Dorsolateral prefrontal cortex (tissue), 120 donors: ENCODE measurements at regions of chr12 and their contacts with region 1.

Region 1: DNA sequence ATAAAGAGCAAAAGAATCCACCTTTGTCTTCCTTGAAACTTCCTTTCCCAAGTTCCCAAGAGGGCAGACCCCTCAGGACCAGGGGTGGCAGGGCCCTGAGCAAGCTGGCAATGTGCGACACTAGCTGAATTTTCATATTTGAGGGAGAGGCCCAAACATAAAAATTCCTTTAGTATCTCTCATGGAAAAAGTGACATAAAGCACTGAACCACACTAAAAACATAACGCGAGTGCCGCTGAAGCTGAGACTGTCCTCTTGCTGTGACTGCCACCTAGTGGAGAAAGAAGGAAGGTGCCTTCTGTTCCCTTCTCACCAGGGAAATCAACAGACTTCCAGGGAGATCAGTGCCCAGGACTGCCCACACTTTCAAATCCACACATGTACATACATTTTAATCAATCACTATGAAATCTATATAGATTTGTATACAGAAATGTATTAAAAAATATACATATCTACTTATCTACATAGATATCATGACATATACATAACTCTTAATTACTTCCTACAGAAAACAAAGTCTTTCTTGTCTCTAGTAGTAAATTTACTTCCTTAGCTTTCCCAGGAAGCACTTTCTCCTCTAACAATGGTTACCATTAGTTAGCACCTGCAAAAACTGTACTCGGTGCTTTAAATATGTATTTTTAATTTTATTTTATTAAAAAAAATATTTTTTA is 53.8 kb downstream of the SSH1 start:
- DNase-seq: peak in 7 of 10 donors; percentile 70 to 89 (median 75)
- H3K4me3 ChIP-seq: peak overlapping the region in 3 of 59 donors; percentile 6 to 21 (median 10)
- H3K27ac ChIP-seq: peak overlapping the region in 58 of 59 donors; percentile 2 to 87 (median 73)
- H3K27me3 ChIP-seq: no peaks in the 10 kb centered on the region
- CTCF ChIP-seq: peak; percentile 93 to 100 (median 98)

Region 2: DNA sequence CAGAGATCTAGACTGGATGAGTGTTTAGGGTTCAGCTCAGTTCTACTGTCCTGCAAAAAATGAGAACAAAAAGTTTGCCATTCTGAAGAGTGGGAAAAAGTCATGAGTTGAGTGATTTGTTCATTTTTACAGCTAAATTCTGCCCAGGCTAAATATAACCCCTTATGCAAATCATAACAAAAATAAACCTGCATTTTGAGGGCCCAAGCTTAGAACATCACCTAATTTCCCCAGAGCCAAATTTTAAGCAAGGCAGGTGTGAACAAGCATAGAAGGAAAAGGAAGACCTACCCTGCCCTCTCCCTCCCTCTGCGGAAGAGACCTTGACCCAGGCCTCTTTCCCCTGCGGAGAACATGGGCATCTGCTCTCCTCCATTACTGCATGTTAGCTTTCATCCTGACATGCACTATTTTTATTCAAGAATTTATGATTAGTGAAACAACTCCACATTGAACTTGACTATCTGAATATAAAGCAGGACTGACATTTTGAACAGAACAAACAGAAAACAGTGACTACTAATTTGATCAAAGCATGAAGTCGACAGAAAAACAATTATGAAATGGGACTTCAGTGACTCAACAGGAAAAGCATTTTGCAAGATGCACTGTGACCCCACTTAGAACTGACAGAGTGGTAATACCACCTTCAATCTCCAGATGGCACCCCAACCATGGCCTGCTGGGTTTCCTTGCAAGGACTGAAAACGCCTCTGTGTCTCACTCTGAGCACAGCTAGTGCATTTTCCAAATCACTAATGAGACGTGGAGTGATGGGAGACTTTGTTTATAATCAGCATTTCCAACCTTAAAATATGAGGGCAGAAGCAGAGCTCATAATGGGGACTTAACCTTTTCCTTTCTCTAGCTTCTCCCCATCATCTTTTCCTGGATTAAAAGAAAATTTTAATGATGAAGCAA is 139.0 kb before region 1 on chr12:
- intact Hi-C with region 1: loop called (anchors 1 to 2 kb)
- DNase-seq: peak; percentile 52 to 92 (median 82)
- H3K4me3 ChIP-seq: peak overlapping the region in 1 of 59 donors; percentile 10
- H3K27ac ChIP-seq: peak overlapping the region; percentile 18 to 90 (median 77)
- H3K27me3 ChIP-seq: no peaks in the 10 kb centered on the region
- CTCF ChIP-seq: peak; percentile 87 to 99 (median 96)

Region 3: DNA sequence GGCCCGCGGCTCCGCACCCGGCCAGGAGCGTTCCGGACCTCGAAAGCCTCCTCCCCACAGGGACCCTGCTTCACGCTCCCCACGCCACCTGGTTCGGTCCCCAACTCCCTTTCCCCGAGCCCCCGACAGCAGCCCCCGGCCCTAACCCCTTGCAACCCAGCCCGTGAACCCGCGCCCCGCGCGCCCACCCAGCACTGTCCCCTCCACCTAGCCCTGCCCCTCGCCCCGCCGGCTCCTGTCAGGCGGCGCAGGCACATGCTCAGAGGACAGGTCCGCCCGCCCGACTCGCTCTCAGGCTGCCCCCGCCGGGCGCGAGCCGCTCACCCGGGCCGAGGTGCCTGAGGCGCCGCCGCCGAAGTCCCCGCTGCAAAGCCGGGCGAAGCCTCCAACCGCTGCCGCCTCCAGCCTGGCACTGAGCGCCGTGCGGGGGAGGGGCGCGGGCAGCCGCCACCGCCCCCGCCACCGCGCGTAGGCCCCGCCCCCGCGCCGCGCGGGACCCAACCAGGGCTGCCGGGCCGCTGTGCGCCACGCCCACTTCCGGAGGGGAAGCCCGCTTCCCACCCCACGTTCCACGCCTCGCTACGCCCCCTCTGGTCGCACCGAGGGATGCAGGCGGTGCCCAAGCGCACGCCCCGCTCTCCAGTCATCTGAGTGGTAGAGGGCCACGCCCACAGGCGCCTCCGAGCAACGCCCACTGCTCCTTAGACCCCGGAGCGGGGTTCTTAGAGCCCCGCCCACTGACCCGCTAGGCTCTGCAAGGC is 72.3 kb before region 1 on chr12 and contains the start of gene CORO1C:
- intact Hi-C with region 1: loop called (anchors 5 kb)
- DNase-seq: peak; percentile 85 to 96 (median 90)
- H3K4me3 ChIP-seq: peak within 1 kb of the TSS; percentile 64 to 97 (median 88)
- H3K27ac ChIP-seq: peak within 1 kb of the TSS; percentile 71 to 99 (median 95)
- H3K27me3 ChIP-seq: no peaks in the 10 kb centered on the region
- CTCF ChIP-seq: peak; percentile 48 to 93 (median 82)
- total RNA-seq, gene CORO1C: 87.2 to 202 (median 122) TPM

Region 4: GRCh38 chr12:108856428-108857157 is 53.0 kb after region 1 on chr12:
- intact Hi-C with region 1: loop called (anchors 5 to 10 kb)
- DNase-seq: peak in 9 of 10 donors; percentile 39 to 82 (median 69)
- H3K4me3 ChIP-seq: peak overlapping the region; percentile 60 to 95 (median 81)
- H3K27ac ChIP-seq: peak overlapping the region in 58 of 59 donors; percentile 47 to 95 (median 87)
- H3K27me3 ChIP-seq: no peaks in the 10 kb centered on the region
- CTCF ChIP-seq: no peak

Region 5: GRCh38 chr12:108879615-108880254 is 76.2 kb after region 1 on chr12 and contains the start of gene DAO:
- intact Hi-C with region 1: no loop called
- DNase-seq: no peak
- H3K4me3 ChIP-seq: no peak within 1 kb of the TSS
- H3K27ac ChIP-seq: no peak within 1 kb of the TSS
- H3K27me3 ChIP-seq: no peaks in the 10 kb centered on the region
- CTCF ChIP-seq: no peak
- total RNA-seq, gene DAO: 0.23 to 6.0 (median 0.83) TPM in 51 of 120 experiments, not detected in the others

Region 6: GRCh38 chr12:109093022-109093918 is 289.7 kb after region 1 on chr12 and contains the start of gene ALKBH2:
- intact Hi-C with region 1: loop called (anchors 5 kb)
- DNase-seq: peak; percentile 89 to 95 (median 94)
- H3K4me3 ChIP-seq: peak within 1 kb of the TSS; percentile 35 to 88 (median 68)
- H3K27ac ChIP-seq: peak within 1 kb of the TSS in 53 of 59 donors; percentile 1 to 88 (median 65)
- H3K27me3 ChIP-seq: no peaks in the 10 kb centered on the region
- CTCF ChIP-seq: peak; percentile 96 to 100 (median 99)
- total RNA-seq, gene ALKBH2: 6.8 to 20.9 (median 12.4) TPM